ENCODE measurements at regions of chr16 and their contacts with region 1.

Region 1: GRCh38 chr16:46853713-46854443 is 22.9 kb upstream of the C16orf87 start:
- DNase-seq: peak; percentile 4
- H3K4me3 ChIP-seq: no peak overlapping the region
- H3K27ac ChIP-seq: peak overlapping the region in 1 of 4 donors; percentile 27
- H3K4me1 ChIP-seq: peaks cover 0 to 39% (median 0%) of the 10 kb centered on the region in 3 donors
- H3K27me3 ChIP-seq: no peaks in the 10 kb centered on the region
- CTCF ChIP-seq: peak; percentile 60 to 85 (median 82)
- POLR2A ChIP-seq: no peak

Region 2: DNA sequence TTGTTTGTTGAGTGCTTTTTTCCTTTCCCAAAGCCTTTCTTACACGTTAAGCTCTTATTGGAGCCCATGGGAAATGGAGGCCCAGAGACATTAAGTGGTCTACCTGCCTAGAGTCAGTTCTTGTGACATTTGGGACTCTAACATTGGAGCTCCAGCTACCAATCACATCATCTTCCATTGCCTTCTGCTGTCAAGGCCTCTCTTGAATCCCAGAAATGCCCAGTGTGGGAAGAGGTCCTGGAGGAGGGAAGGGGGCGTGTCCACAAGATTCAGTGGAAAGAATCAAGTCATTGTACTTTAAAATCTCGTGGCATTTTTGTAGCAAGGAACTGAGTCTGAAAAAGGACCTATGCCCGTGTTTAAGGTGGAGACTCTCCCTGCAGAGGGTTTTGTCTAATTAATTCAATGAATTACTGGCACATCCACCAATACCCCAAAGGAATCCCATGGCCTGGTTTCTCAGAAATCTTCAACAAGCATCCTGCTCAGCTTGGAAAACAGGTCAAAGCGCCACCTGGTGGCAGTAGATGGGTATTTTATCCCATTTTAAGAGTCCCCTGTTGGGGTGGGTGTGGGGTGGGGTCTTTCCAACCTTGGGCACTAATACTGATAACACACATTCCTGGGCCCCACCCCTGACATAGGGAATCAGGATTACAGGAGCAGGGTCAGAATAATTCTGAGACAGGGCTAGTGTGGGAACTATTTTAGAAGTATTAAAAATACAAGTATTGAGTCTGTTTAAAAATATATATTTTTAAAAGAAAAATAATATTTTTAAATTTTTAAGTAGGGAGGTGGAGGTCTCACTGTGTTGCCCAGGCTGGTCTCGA is 54.9 kb after region 1 on chr16:
- intact Hi-C with region 1: loop called (anchors 2 kb)
- DNase-seq: no peak
- H3K4me3 ChIP-seq: no peak overlapping the region
- H3K27ac ChIP-seq: peak overlapping the region in 2 of 4 donors; percentile 5 to 44
- H3K4me1 ChIP-seq: peaks cover 0 to 14% (median 0%) of the 10 kb centered on the region in 3 donors
- H3K27me3 ChIP-seq: no peaks in the 10 kb centered on the region
- CTCF ChIP-seq: peak; percentile 57 to 87 (median 71)
- POLR2A ChIP-seq: no peak